ENCODE measurements at regions of chr7 and their contacts with region 1.

Region 1: GRCh38 chr7:36440880-36441279 is 51.2 kb downstream of the ANLN start:
- DNase-seq: peak; percentile 36 to 60 (median 57)
- H3K4me3 ChIP-seq: no peak overlapping the region
- H3K27ac ChIP-seq: no peak overlapping the region
- H3K4me1 ChIP-seq: peaks cover 0 to 6% (median 1%) of the 10 kb centered on the region in 4 experiments
- H3K27me3 ChIP-seq: no peaks in the 10 kb centered on the region

Region 2: GRCh38 chr7:36430186-36430585 is 10.7 kb before region 1 on chr7:
- CTCF ChIA-PET with region 1: interaction called, 12 read pairs
- POLR2A ChIA-PET with region 1: no interaction called
- DNase-seq: no peak
- H3K4me3 ChIP-seq: no peak overlapping the region
- H3K27ac ChIP-seq: no peak overlapping the region
- H3K4me1 ChIP-seq: no peaks in the 10 kb centered on the region
- H3K27me3 ChIP-seq: no peaks in the 10 kb centered on the region

Region 3: GRCh38 chr7:36473454-36474282 is 32.8 kb after region 1 on chr7:
- CTCF ChIA-PET with region 1: interaction called, 32 read pairs
- POLR2A ChIA-PET with region 1: no interaction called
- DNase-seq: peak in 2 of 3 donors; percentile 31 to 68
- H3K4me3 ChIP-seq: no peak overlapping the region
- H3K27ac ChIP-seq: no peak overlapping the region
- H3K4me1 ChIP-seq: peaks cover 14 to 46% (median 25%) of the 10 kb centered on the region in 4 experiments
- H3K27me3 ChIP-seq: no peaks in the 10 kb centered on the region

Region 4: GRCh38 chr7:36670585-36671431 is 229.9 kb after region 1 on chr7:
- CTCF ChIA-PET with region 1: interaction called, 25 read pairs
- POLR2A ChIA-PET with region 1: no interaction called
- DNase-seq: peak; percentile 75 to 88 (median 82)
- H3K4me3 ChIP-seq: no peak overlapping the region
- H3K27ac ChIP-seq: no peak overlapping the region
- H3K4me1 ChIP-seq: peaks cover 0 to 27% (median 15%) of the 10 kb centered on the region in 4 experiments
- H3K27me3 ChIP-seq: no peaks in the 10 kb centered on the region

Region 5: GRCh38 chr7:37201003-37201875 is 760.4 kb after region 1 on chr7:
- CTCF ChIA-PET with region 1: interaction called, 63 read pairs
- POLR2A ChIA-PET with region 1: no interaction called
- DNase-seq: peak; percentile 56 to 72 (median 67)
- H3K4me3 ChIP-seq: no peak overlapping the region
- H3K27ac ChIP-seq: no peak overlapping the region
- H3K4me1 ChIP-seq: peaks cover 0 to 26% (median 11%) of the 10 kb centered on the region in 4 experiments
- H3K27me3 ChIP-seq: no peaks in the 10 kb centered on the region

Measured in common myeloid progenitor, CD34-positive (primary cell).